Testis (tissue), 5 donors: ENCODE measurements at regions of chr17 and their contacts with region 1.

Region 1: DNA sequence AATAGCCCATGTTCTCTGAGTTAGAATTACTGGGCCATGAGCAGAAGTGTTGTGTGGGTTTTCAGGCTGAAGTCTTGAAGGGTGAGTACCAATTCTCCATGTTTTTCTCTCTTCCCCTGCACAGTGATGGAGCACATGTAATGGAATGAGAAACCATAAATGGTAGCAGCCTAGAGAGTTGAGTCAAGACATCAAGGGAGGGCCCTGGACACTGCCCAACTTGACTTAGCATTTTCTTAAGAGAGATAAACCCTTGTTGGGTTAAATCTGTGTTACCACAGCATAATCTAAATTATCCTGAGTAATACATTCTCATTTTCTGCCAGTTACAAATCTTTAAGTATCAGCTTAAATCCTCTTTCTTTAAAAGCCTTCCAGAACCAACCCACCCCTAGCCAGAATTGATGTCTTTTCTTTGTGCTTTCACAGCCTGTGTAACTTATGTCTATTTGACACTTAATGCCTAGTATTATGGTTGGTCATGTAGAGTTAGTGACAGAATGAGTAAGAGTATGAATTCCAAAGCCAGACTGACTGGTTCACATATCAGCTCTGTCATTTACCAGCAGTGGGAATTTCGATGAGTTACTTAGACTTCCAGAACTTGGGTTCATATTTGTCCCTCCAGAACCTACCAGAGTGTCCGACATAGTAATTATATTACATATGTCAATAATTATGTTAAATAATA is 27.0 kb upstream of the RGS9 start:
- DNase-seq: no peak
- H3K4me3 ChIP-seq: no peak overlapping the region
- H3K27ac ChIP-seq: no peak overlapping the region
- H3K4me1 ChIP-seq: peaks cover 24% of the 10 kb centered on the region
- H3K27me3 ChIP-seq: no peaks in the 10 kb centered on the region
- CTCF ChIP-seq: no peak
- POLR2A ChIP-seq: no peak

Region 2: GRCh38 chr17:65055348-65056261 is 54.5 kb before region 1 on chr17:
- intact Hi-C with region 1: loop called (anchors 5 kb)
- DNase-seq: peak; percentile 80
- H3K4me3 ChIP-seq: peak overlapping the region; percentile 96 to 97
- H3K27ac ChIP-seq: peak overlapping the region; percentile 99 to 100
- H3K4me1 ChIP-seq: peaks cover 27% of the 10 kb centered on the region
- H3K27me3 ChIP-seq: no peaks in the 10 kb centered on the region
- CTCF ChIP-seq: no peak
- POLR2A ChIP-seq: no peak

Region 3: DNA sequence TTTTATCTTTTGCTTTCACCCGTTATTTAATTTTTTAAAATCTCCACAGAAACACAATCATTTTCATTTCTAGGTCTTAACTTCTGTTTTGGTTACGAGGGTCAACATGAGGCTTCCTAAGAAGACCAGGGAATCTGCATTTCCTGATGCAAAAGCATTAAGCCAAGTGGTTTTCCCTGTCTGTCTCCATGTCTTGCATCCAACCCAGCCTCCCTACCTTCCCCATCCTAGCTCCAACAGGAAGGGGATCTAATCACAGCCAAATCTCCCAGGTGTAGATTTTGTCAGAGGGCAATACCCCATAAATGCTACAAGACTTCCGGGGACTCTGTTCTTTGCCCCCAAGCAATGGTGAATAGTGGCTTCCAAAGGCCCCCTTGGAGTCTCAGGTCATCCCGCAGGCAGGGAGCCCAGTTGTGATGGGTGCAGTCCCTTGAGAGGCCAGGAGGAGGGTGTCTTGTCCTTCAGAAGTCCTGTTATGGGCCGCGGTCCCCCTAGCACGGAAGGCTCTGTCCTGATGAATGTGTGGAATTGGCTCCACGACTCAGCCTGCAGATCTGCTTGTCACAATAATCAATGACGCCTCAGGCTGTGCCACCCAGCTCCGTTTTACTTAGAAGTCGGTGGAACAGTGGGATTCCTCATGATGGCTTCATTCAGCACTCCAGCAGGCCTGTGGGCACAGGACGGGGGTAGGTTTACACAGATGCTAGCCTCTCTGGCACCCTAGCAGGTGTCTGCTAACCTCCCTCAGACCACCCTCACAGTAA is 168.1 kb after region 1 on chr17:
- intact Hi-C with region 1: no loop called
- DNase-seq: peak; percentile 62
- H3K4me3 ChIP-seq: no peak overlapping the region
- H3K27ac ChIP-seq: no peak overlapping the region
- H3K4me1 ChIP-seq: no peaks in the 10 kb centered on the region
- H3K27me3 ChIP-seq: no peaks in the 10 kb centered on the region
- CTCF ChIP-seq: peak; percentile 17 to 45 (median 26)
- POLR2A ChIP-seq: no peak